Testis (tissue), 5 donors: ENCODE measurements at regions of chr11 and their contacts with region 1.

Region 1: GRCh38 chr11:65421803-65422690 is 551 bp upstream of the NEAT1 start:
- DNase-seq: peak; percentile 97
- H3K4me3 ChIP-seq: peak overlapping the region; percentile 86 to 93
- H3K27ac ChIP-seq: peak overlapping the region; percentile 94 to 96
- H3K4me1 ChIP-seq: peaks cover 47% of the 10 kb centered on the region
- H3K27me3 ChIP-seq: no peaks in the 10 kb centered on the region
- CTCF ChIP-seq: peak in 1 of 3 experiments; percentile 1
- POLR2A ChIP-seq: no peak

Region 2: GRCh38 chr11:65497141-65498041 is 75.3 kb after region 1 on chr11:
- intact Hi-C with region 1: loop called (anchors 5 kb)
- DNase-seq: peak; percentile 98
- H3K4me3 ChIP-seq: peak overlapping the region; percentile 90 to 94
- H3K27ac ChIP-seq: peak overlapping the region; percentile 92 to 96
- H3K4me1 ChIP-seq: peaks cover 46% of the 10 kb centered on the region
- H3K27me3 ChIP-seq: no peaks in the 10 kb centered on the region
- CTCF ChIP-seq: peak in 1 of 3 experiments; percentile 5
- POLR2A ChIP-seq: peak; percentile 67